Right cardiac atrium (tissue), 5 donors: ENCODE measurements at regions of chr2 and their contacts with region 1.

Region 1: GRCh38 chr2:179226203-179226960 is 38.2 kb downstream of the SESTD1 start:
- DNase-seq: peak in 2 of 3 donors; percentile 27 to 48
- ATAC-seq: no peak
- H3K4me3 ChIP-seq: no peak overlapping the region
- H3K27ac ChIP-seq: no peak overlapping the region
- H3K4me1 ChIP-seq: peaks cover 6% of the 10 kb centered on the region
- H3K27me3 ChIP-seq: no peaks in the 10 kb centered on the region

Region 2: DNA sequence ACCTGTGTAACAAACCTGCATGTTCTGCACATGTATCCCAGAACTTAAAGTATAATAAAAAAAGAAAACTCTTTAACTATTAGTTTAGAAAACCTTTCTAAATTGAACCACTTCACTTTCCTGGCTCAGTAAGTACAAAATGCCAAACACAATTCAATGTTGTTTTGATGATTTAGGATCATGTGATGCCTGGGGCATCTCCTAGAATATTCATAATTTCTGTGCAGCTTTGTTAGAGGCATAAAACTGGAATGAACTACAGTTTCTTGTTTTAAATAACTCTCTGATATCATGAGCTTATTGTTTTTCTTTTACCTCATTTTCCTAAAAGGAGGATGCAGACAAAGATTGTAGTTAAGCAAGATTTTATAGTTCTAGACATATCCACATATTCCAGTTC is 177.2 kb after region 1 on chr2:
- intact Hi-C with region 1: no loop called
- DNase-seq: no peak
- ATAC-seq: no peak
- H3K4me3 ChIP-seq: no peak overlapping the region
- H3K27ac ChIP-seq: no peak overlapping the region
- H3K4me1 ChIP-seq: no peaks in the 10 kb centered on the region
- H3K27me3 ChIP-seq: no peaks in the 10 kb centered on the region

Region 3: GRCh38 chr2:179768765-179769164 is 542.4 kb after region 1 on chr2:
- intact Hi-C with region 1: loop called in 1 of 4 experiments (anchors 10 kb)
- DNase-seq: no peak
- ATAC-seq: peak; percentile 77 to 84
- H3K4me3 ChIP-seq: no peak overlapping the region
- H3K27ac ChIP-seq: peak overlapping the region; percentile 48
- H3K4me1 ChIP-seq: no peaks in the 10 kb centered on the region
- H3K27me3 ChIP-seq: no peaks in the 10 kb centered on the region